ENCODE measurements at regions of chr12 and their contacts with region 1.

Region 1: GRCh38 chr12:98572010-98572409 is 21.5 kb upstream of the SLC25A3 start:
- DNase-seq: peak in 1 of 2 experiments; percentile 23
- H3K4me3 ChIP-seq: no peak overlapping the region
- H3K4me1 ChIP-seq: no peaks in the 10 kb centered on the region
- H3K27me3 ChIP-seq: no peaks in the 10 kb centered on the region

Region 2: GRCh38 chr12:98345308-98345876 is 226.6 kb before region 1 on chr12:
- in situ Hi-C with region 1: no loop called
- DNase-seq: no peak
- H3K4me3 ChIP-seq: no peak overlapping the region
- H3K4me1 ChIP-seq: peaks cover 5% of the 10 kb centered on the region; the same call in 1 of the 2 replicates
- H3K27me3 ChIP-seq: peaks cover 18% of the 10 kb centered on the region

Region 3: GRCh38 chr12:99005601-99006000 is 433.6 kb after region 1 on chr12:
- in situ Hi-C with region 1: loop called (anchors 25 kb)
- DNase-seq: no peak
- H3K4me3 ChIP-seq: no peak overlapping the region
- H3K4me1 ChIP-seq: no peaks in the 10 kb centered on the region; the same call in 1 of the 2 replicates
- H3K27me3 ChIP-seq: peaks cover 5% of the 10 kb centered on the region; the same call in 1 of the 2 replicates

Measured in HAP-1 (cell line).